ENCODE measurements at regions of chr15 and their contacts with region 1.

Region 1: DNA sequence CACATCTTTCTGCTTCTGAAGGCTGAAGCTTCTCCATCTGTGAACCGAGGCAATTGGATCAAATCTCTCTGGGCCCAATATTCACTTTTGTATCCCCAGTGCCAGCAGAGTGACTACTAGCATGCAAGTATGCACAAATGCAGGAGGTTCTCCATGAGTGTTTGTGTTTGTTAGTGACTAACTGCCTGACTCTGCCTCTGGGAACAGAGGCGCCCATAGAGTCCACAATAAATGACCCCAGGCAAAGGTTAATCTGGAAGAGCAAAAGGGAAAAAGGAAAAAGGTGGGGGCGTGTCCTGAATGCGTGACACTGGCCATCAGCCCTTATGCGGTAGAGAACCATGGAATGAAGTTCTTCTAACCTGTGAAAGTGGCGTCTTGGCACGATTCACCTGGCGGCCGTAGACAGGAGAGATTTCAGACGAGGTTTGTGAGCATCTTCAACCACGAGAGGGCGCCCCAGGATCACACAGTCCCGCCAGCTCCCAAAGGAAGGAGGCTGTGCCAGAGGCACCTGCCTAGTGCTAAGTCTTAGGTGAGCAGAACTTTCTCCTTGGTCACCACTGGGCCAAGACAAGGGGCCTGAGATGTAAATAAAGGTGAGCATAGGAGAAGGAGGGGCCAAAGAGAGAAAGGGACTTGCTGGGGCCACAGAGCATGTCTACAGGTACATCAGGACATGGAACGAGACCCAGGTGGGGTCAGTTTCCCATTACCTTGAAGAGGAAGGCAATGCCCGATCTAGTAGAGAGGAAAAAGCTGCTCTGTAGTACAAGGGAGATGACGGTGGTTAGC is 44.2 kb downstream of the RBPMS2 start:
- DNase-seq: peak; percentile 80
- CTCF ChIP-seq: peak; percentile 86

Region 2: DNA sequence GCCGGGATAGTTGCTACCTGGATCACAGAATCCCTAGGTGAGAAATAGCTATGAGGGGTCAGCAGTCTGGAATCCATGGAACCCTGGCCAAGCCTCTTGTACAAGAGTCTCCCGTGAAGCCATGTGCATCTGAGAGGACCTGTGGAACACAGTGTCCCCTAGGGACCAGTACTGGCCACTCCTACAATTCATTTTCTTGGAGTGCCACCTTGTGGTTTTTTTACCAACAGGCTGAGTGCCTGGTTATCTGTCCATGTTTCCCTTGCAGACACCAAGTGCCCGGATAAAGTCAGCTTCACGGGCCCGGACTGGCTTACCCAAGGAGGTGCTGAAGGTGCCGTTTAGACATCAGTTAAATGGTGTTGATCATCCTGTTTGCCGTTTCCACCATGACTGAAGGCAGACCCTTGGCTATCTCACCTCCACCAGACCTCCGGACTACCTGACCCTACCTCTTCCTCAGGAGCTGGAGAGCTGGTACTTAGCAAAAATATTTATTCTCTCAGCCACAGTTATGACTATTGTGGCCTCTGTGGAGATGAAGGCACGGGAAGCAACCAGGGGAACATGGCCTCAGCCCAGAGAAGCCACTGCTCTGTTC is 49.7 kb before region 1 on chr15:
- CTCF ChIA-PET with region 1: interaction called, 151 read pairs
- POLR2A ChIA-PET with region 1: no interaction called
- DNase-seq: peak; percentile 58
- CTCF ChIP-seq: peak; percentile 54

Region 3: DNA sequence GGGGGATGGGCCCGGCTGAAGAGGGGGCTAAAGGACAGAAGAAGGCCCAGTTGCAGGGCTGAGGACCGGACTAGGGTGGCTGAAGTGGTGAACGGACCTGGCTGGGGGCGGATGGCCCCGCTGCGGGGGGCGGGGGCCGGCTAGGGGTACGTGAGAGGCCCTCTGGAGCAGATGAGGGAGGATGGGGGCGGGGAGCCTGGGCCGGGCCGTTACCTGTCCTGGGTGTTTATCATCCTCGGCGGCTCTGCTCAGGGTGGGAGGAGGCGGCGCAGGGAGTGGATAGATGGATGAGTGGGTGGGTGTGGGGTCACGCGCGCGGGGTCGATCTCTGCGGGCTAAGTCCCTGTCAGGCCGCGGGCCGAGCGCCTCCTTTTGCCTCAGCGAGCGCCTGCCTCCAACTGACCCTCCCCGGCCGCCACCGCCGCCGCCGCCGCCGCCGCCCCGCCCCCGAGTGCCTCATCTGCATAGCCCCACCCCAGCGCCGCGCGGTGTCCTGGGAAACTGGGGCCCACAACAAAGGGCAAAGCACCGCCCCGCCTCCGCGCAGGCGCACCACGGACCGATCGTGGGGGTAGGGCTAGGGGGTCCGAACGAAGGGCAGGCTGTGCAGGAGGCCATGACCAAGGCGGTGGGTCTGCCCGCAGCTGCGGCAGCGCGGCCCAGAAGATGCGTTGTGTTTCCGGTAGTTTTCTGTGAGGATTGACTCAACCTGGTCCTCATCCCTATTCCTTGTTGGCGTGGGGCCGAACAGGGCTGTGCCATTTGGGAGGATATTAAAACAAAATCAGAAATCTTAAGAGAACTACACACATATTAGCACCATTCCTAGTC is 28.2 kb before region 1 on chr15:
- CTCF ChIA-PET with region 1: interaction called, 97 read pairs
- POLR2A ChIA-PET with region 1: no interaction called
- DNase-seq: peak; percentile 99
- CTCF ChIP-seq: no peak

Region 4: GRCh38 chr15:64749999-64750657 is 18.9 kb after region 1 on chr15:
- CTCF ChIA-PET with region 1: interaction called, 14 read pairs
- POLR2A ChIA-PET with region 1: no interaction called
- DNase-seq: no peak
- CTCF ChIP-seq: no peak

Region 5: GRCh38 chr15:64809649-64810496 is 78.7 kb after region 1 on chr15:
- CTCF ChIA-PET with region 1: interaction called, 300 read pairs
- POLR2A ChIA-PET with region 1: no interaction called
- DNase-seq: peak; percentile 86
- CTCF ChIP-seq: peak; percentile 96